GM18951 (cell line): ENCODE measurements at regions of chr17 and their contacts with region 1.

Region 1: DNA sequence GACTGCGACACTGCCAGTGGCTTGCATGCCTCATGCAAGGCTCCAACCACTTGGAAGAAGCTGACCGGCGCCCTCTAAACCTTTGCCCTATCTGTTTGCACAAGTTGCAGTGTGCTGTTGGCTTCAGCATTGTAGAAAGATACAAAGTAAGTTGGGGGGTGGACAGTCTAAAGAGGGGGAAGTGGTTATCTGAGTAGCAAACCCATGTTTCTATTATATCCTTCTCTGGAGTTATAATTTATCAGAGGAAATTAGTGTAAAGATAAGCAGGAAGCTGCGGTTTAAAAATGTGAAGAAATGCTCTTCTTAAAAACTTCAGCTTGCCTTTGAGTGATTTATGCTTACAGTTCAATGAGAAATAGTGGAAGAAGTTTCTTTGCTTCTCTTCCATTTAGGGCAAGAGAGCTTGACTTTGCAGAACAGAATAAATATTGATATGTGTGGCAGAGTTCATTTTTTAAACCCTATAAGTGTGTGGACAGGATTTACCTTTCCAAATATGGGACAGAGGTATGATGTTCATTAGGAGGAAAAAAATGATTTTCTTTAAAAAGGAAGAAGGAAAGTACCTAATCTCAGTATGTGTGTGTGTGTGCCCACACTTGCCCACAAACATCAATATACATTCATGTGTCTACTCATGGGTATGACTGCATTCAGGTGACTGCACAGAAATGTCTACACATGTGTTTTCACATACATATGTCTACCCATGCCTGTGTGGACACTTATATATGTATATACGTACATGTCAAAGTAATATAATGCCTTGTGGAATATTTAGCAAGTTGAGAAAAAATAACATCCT is 8.1 kb downstream of the AMZ2 start:
- POLR2A ChIP-seq: no peak

Region 2: GRCh38 chr17:68435876-68436842 is 180.2 kb after region 1 on chr17:
- in situ Hi-C with region 1: loop called (anchors 10 kb)
- POLR2A ChIP-seq: no peak

Region 3: DNA sequence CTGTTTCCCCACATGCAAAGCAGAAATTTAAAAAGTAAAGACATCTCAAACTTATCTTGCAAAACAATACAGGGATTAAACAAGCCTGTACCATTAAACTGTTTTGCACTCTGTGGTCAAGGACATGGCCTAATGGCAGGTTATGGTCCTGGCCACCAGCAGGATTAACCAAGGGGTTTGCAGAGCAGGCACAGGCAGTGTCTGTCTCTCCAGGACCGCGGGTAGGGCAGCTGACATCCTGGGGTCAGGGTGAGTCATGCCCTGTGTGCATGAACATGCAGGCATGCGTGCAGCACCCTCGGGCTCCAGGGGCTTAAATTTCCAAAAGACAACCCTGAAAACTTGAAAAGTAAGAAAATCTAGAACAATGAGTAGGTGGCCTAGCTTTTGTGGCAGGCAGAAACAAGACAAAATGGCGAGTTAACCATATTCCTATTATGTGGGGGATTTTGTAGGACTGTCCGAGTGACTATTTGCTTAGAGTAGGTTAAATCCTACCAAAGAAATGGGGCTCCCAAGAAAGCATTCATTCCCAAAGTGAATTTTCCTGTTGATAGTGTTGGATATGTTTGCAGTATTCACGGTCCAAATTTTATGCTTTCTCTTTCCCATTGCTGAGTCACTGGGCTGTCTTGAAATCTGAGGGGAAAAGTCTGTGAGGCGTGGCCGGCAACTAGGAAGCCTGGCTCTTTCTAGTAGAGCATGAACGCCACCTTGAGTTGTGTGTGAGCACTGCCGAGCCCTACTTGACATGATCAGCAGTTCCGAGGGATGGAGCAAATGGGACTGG is 503.6 kb after region 1 on chr17:
- in situ Hi-C with region 1: loop called (anchors 25 kb)
- POLR2A ChIP-seq: no peak